ENCODE measurements at regions of chr15 and their contacts with region 1.

Region 1: DNA sequence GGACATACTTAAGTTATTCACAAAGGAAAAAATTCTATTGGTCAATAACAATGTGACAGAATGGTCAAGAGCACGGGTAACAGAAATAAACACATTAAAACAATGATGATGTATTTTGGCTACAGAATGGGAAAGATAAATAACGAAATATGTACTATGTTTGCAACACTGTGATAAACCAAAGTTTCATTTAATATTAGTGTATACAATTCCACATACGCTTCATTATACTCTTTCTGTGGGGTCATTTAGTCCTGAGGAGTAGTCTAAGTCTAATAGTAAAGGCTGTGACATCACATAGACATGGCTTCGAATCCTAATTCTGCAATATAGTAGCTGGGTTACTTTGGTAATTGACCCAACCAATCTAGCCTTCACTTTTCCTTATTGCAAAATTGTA is 408.3 kb downstream of the MCTP2 start:
- DNase-seq: no peak
- H3K4me3 ChIP-seq: no peak overlapping the region
- H3K27ac ChIP-seq: no peak overlapping the region
- H3K4me1 ChIP-seq: no peaks in the 10 kb centered on the region
- H3K27me3 ChIP-seq: no peaks in the 10 kb centered on the region
- CTCF ChIP-seq: no peak
- EP300 ChIP-seq: no peak
- POLR2A ChIP-seq: no peak

Region 2: DNA sequence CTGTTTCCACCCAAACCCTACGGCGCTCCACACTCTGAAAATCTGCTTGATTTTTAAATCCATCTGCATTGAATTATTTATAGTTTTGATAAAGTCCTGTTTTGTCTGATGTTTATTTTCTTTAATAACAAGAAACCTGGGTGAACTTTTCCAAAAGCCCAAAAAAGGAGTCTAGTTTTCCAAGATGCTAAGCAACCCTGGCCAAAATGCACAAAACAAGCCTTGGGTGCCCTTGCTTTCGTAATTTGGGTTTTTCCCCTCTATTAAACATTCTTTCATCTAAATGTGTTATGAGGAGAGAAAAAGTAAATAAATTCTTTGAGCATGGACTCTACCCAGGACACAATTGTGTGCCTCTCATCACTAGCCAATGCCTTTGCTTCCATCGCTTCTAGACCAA is 60.5 kb after region 1 on chr15:
- in situ Hi-C with region 1: loop called in 1 of 4 experiments (anchors 10 kb)
- intact Hi-C with region 1: no loop called
- DNase-seq: no peak
- H3K4me3 ChIP-seq: no peak overlapping the region
- H3K27ac ChIP-seq: no peak overlapping the region
- H3K4me1 ChIP-seq: no peaks in the 10 kb centered on the region
- H3K27me3 ChIP-seq: no peaks in the 10 kb centered on the region
- CTCF ChIP-seq: no peak
- EP300 ChIP-seq: no peak
- POLR2A ChIP-seq: no peak

Region 3: GRCh38 chr15:94844538-94845389 is 205.1 kb after region 1 on chr15:
- in situ Hi-C with region 1: no loop called
- intact Hi-C with region 1: no loop called
- DNase-seq: peak; percentile 91
- H3K4me3 ChIP-seq: peak overlapping the region; percentile 19 to 54 (median 38)
- H3K27ac ChIP-seq: peak overlapping the region; percentile 86 to 92 (median 90)
- H3K4me1 ChIP-seq: peaks cover 0 to 30% (median 17%) of the 10 kb centered on the region in 4 donors
- H3K27me3 ChIP-seq: no peaks in the 10 kb centered on the region
- CTCF ChIP-seq: peak in 1 of 5 experiments; percentile 19
- EP300 ChIP-seq: no peak
- POLR2A ChIP-seq: peak; percentile 31

Measured in transverse colon (tissue), 4 donors.